ENCODE measurements at regions of chr13 and their contacts with region 1.

Region 1: GRCh38 chr13:28796938-28797257 is 23.2 kb upstream of the MTUS2 start:
- DNase-seq: no peak
- ATAC-seq: no peak
- H3K4me3 Mint-ChIP-seq: peak overlapping the region; percentile 32
- H3K27ac Mint-ChIP-seq: no peak overlapping the region
- H3K4me1 Mint-ChIP-seq: no peaks in the 10 kb centered on the region
- H3K27me3 Mint-ChIP-seq: peaks cover 19% of the 10 kb centered on the region

Region 2: DNA sequence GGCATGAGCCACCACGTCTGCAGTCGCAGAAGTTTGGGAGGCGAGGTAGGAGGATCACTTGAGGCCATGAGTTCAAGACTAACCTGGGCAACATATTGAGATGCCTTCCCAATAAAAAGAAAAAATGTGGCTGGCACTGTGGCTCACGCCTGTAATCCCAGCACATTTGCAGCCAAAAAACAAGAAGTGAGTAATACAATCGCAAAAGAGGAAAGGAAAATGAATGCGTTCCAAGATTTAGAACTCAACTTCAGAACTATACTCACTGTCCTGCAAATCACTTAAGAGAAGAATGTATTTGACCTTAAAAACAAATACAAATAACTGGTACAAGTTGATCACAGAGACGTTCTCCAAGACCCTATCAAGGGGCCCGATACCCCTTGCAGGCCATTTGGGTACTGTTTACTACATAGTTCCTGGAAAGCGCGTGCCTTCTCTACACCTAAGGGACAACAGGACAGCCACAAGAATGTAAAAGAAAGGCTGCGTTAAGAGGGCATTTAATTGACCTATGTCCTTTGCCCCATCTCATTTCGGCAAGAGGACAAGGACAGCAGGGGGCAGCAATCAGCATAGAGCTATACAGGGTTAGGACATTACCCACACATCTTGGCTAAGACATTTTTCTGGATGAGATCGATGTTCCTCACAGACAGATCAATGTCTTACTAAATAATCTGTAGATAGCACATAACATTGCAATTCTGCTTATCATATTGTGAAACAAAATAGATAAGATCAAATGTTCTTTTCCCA is 737.9 kb before region 1 on chr13:
- CTCF ChIA-PET with region 1: no interaction called
- POLR2A ChIA-PET with region 1: no interaction called
- intact Hi-C with region 1: loop called in 1 of 2 experiments (anchors 2 kb)
- DNase-seq: peak; percentile 72
- ATAC-seq: peak; percentile 55
- H3K4me3 Mint-ChIP-seq: no peak overlapping the region
- H3K27ac Mint-ChIP-seq: no peak overlapping the region
- H3K4me1 Mint-ChIP-seq: no peaks in the 10 kb centered on the region
- H3K27me3 Mint-ChIP-seq: peaks cover 18% of the 10 kb centered on the region

Region 3: DNA sequence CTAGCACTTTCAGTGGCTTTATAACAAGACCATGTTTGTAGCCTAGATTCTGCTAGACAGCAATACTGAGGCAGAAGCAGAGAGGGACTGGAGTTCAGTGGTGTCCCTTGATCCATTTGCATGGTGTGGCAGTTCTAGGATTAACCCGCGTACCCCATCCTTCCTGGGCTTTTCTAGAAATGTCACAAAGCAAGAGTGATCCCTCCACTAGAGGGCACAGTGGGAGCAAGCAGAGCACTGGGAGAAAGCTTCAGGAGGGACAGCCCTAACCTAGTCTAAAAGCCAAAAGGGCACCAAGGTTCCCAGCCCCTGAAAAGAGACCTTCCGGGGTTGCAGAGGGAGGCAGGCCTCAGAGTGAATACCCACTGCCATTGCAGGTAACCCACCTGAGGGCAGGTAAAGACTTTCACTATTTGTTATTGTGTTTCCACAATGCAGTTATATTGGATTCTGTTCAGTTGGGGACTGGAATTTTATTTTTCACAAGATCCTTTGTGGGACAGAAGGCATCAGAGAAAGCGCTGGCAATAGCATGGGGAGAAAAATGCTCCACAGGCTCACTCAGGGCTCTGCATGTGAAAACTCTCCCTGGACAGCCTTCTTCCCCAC is 472.6 kb before region 1 on chr13:
- CTCF ChIA-PET with region 1: interaction called, 8 read pairs
- POLR2A ChIA-PET with region 1: no interaction called
- intact Hi-C with region 1: loop called (anchors 1 kb)
- DNase-seq: peak; percentile 74
- ATAC-seq: peak; percentile 78
- H3K4me3 Mint-ChIP-seq: no peak overlapping the region
- H3K27ac Mint-ChIP-seq: no peak overlapping the region
- H3K4me1 Mint-ChIP-seq: peaks cover 3% of the 10 kb centered on the region
- H3K27me3 Mint-ChIP-seq: no peaks in the 10 kb centered on the region

Region 4: GRCh38 chr13:28679628-28680027 is 117.3 kb before region 1 on chr13:
- CTCF ChIA-PET with region 1: interaction called, 3 read pairs
- POLR2A ChIA-PET with region 1: no interaction called
- intact Hi-C with region 1: loop called (anchors 5 kb)
- DNase-seq: no peak
- ATAC-seq: no peak
- H3K4me3 Mint-ChIP-seq: no peak overlapping the region
- H3K27ac Mint-ChIP-seq: peak overlapping the region; percentile 34
- H3K4me1 Mint-ChIP-seq: no peaks in the 10 kb centered on the region
- H3K27me3 Mint-ChIP-seq: no peaks in the 10 kb centered on the region